ENCODE measurements at regions of chr17 and their contacts with region 1.

Region 1: GRCh38 chr17:7004398-7005253 is 7.8 kb upstream of the RNASEK start:
- DNase-seq: peak in 12 of 35 experiments; percentile 19 to 85 (median 39)
- ATAC-seq: peak; percentile 81 to 94 (median 84)
- H3K4me3 ChIP-seq: no peak overlapping the region
- H3K4me3 Mint-ChIP-seq: no peak overlapping the region
- H3K27ac ChIP-seq: no peak overlapping the region
- H3K27ac Mint-ChIP-seq: peak overlapping the region in 1 of 2 donors; percentile 25
- H3K4me1 ChIP-seq: peaks cover 0 to 5% of the 10 kb centered on the region in 2 experiments
- H3K4me1 Mint-ChIP-seq: peaks cover 28 to 34% (median 33%) of the 10 kb centered on the region in 3 donors
- H3K27me3 ChIP-seq: no peaks in the 10 kb centered on the region
- H3K27me3 Mint-ChIP-seq: no peaks in the 10 kb centered on the region

Region 2: GRCh38 chr17:6843241-6843880 is 161.3 kb before region 1 on chr17:
- CTCF ChIA-PET with region 1: interaction called in 1 of 2 experiments, 48 read pairs
- POLR2A ChIA-PET with region 1: no interaction called
- DNase-seq: peak in 1 of 35 experiments; percentile 68
- ATAC-seq: peak in 2 of 4 experiments; percentile 33 to 59
- H3K4me3 ChIP-seq: no peak overlapping the region
- H3K4me3 Mint-ChIP-seq: no peak overlapping the region
- H3K27ac ChIP-seq: no peak overlapping the region
- H3K27ac Mint-ChIP-seq: no peak overlapping the region
- H3K4me1 ChIP-seq: no peaks in the 10 kb centered on the region
- H3K4me1 Mint-ChIP-seq: peaks cover 0 to 6% (median 3%) of the 10 kb centered on the region in 3 donors
- H3K27me3 ChIP-seq: peaks cover 11 to 22% of the 10 kb centered on the region in 2 experiments
- H3K27me3 Mint-ChIP-seq: peaks cover 35 to 43% of the 10 kb centered on the region in 2 donors

Region 3: GRCh38 chr17:6913608-6914443 is 90.8 kb before region 1 on chr17:
- CTCF ChIA-PET with region 1: interaction called, 13 to 70 read pairs
- POLR2A ChIA-PET with region 1: no interaction called
- DNase-seq: peak; percentile 41 to 82 (median 68)
- ATAC-seq: peak; percentile 74 to 84 (median 77)
- H3K4me3 ChIP-seq: peak overlapping the region; percentile 12 to 45
- H3K4me3 Mint-ChIP-seq: peak overlapping the region; percentile 78 to 84 (median 83)
- H3K27ac ChIP-seq: no peak overlapping the region
- H3K27ac Mint-ChIP-seq: peak overlapping the region; percentile 6 to 67
- H3K4me1 ChIP-seq: peaks cover 0 to 14% of the 10 kb centered on the region in 2 experiments
- H3K4me1 Mint-ChIP-seq: peaks cover 12 to 25% (median 15%) of the 10 kb centered on the region in 3 donors
- H3K27me3 ChIP-seq: peaks cover 0 to 16% of the 10 kb centered on the region in 2 experiments
- H3K27me3 Mint-ChIP-seq: peaks cover 7 to 13% of the 10 kb centered on the region in 2 donors

Region 4: DNA sequence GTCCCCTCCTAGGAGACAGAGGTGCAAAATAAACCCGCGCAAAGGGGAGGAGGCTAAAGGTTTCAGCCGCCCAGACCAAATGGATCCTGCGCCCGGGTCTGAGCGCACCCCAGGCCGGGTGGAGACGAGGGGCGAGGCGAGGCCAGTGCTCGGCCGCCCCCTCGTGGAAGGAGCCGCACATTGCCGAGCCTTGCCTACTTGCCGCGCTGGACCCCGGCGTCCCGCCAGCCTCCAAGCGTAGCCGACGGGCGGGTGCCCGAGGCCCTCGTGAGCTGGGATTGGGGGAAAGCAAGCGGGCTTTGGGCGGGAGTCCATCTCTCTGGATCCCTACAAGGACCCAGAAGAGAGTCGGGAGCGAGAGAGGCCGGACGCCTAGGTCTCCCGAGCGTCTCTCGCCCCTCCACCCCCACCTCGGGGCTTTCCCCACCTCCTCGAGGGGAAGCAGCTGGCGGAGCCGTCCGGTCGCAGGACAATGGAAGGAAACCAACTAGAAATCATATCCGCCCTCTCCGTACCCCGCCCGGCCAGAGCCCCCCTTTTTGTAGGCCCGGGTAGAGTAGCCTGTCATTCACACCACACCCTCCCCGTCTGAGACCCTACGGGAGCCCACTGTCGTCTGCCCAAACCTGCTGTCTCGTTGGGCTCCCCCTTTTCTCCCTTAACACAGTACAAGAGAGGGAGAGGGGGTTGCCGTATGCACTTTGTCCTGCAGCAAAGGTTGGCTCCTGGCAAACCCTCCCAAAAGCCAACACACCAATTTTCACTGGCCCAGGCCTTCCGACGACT is 17.6 kb after region 1 on chr17:
- CTCF ChIA-PET with region 1: interaction called, 6 to 26 read pairs
- POLR2A ChIA-PET with region 1: interaction called in 1 of 2 experiments, 4 read pairs
- DNase-seq: peak in 34 of 35 experiments; percentile 45 to 88 (median 65)
- ATAC-seq: peak; percentile 57 to 85 (median 80)
- H3K4me3 ChIP-seq: peak overlapping the region; percentile 35 to 43
- H3K4me3 Mint-ChIP-seq: peak overlapping the region; percentile 21 to 83 (median 49)
- H3K27ac ChIP-seq: peak overlapping the region; percentile 19
- H3K27ac Mint-ChIP-seq: peak overlapping the region in 1 of 2 donors; percentile 24
- H3K4me1 ChIP-seq: peaks cover 10 to 45% of the 10 kb centered on the region in 2 experiments
- H3K4me1 Mint-ChIP-seq: peaks cover 38 to 50% (median 45%) of the 10 kb centered on the region in 3 donors
- H3K27me3 ChIP-seq: peaks cover 0 to 18% of the 10 kb centered on the region in 2 experiments
- H3K27me3 Mint-ChIP-seq: no peaks in the 10 kb centered on the region

Measured in T-cell (primary cell).